Activated CD4-positive, alpha-beta T cell treated with anti-CD3 and anti-CD28 coated beads, Interleukin-2, amount 10 ng/mL, durations not matched to agents 24 days and 14 days (primary cell): ENCODE measurements at regions of chr13 and their contacts with region 1.

Region 1: GRCh38 chr13:49792550-49793324 is at the start of gene KPNA3:
- DNase-seq: peak; percentile 98
- H3K4me3 Mint-ChIP-seq: peak within 1 kb of the TSS; percentile 93
- H3K27ac Mint-ChIP-seq: peak within 1 kb of the TSS; percentile 99
- H3K4me1 Mint-ChIP-seq: peaks cover 30% of the 10 kb centered on the region
- H3K27me3 Mint-ChIP-seq: no peaks in the 10 kb centered on the region
- total RNA-seq, gene KPNA3: 56.5 and 58.8 TPM in 2 replicates

Region 2: GRCh38 chr13:48923376-48923775 is 869.4 kb before region 1 on chr13:
- intact Hi-C with region 1: no loop called
- DNase-seq: no peak
- H3K4me3 Mint-ChIP-seq: no peak overlapping the region
- H3K27ac Mint-ChIP-seq: no peak overlapping the region
- H3K4me1 Mint-ChIP-seq: no peaks in the 10 kb centered on the region
- H3K27me3 Mint-ChIP-seq: no peaks in the 10 kb centered on the region

Region 3: DNA sequence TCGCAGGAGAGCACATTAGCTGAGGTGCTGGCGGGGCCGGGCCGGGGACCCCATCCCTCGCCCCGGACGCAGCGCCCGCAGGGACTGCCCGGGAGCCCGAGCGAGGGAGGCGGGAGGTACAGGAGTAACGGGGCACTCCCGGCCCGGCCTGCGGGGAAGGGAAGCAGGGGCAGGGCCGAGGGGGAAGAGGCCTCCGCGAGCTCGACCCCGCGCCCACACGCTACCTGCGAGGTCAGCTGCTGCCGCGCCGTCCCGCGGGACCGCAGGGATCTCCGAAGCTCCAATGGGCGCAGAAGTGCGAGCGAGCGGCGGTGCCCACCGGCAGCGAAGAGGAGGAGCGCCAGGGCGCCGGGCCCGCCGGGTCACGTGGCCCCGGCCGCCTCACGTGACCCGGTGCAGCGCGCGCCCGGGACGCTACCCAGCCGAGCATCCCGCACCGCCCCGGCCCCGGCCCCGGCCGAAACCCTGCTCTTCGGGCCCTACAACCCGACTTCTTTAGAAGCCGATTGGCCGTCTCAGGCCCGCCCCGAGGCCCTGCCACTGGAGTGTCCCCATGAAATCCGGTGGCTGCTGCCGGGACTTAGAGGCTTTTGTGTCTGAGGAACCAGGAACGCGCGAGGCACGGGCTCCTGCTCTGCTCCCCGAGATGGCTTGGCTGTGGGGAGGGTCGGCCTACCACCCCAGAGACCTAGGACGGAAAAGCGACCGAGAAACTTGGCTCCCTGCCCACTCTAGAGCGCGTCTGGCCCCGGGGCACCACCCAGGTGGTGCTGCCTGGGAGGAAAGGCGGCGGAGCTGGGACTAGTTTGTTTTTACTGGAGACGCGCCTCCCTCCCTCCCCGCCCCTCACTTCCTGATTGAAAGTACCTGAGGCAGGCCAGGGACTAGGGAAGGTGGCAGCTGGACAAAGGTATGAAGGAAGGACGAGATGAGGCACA is 207.2 kb before region 1 on chr13 and contains the start of gene RCBTB1:
- intact Hi-C with region 1: loop called (anchors 2 kb)
- DNase-seq: peak; percentile 92
- H3K4me3 Mint-ChIP-seq: peak within 1 kb of the TSS; percentile 90
- H3K27ac Mint-ChIP-seq: peak within 1 kb of the TSS; percentile 79
- H3K4me1 Mint-ChIP-seq: peaks cover 29% of the 10 kb centered on the region
- H3K27me3 Mint-ChIP-seq: peaks cover 5% of the 10 kb centered on the region
- total RNA-seq, gene RCBTB1: 14.8 and 16.2 TPM in 2 replicates

Region 4: GRCh38 chr13:49652355-49653305 is 140.1 kb before region 1 on chr13:
- intact Hi-C with region 1: no loop called
- DNase-seq: peak; percentile 70
- H3K4me3 Mint-ChIP-seq: no peak overlapping the region
- H3K27ac Mint-ChIP-seq: no peak overlapping the region
- H3K4me1 Mint-ChIP-seq: peaks cover 4% of the 10 kb centered on the region
- H3K27me3 Mint-ChIP-seq: no peaks in the 10 kb centered on the region

Region 5: GRCh38 chr13:49681842-49682435 is 110.8 kb before region 1 on chr13:
- intact Hi-C with region 1: loop called (anchors 2 kb)
- DNase-seq: no peak
- H3K4me3 Mint-ChIP-seq: no peak overlapping the region
- H3K27ac Mint-ChIP-seq: no peak overlapping the region
- H3K4me1 Mint-ChIP-seq: peaks cover 16% of the 10 kb centered on the region
- H3K27me3 Mint-ChIP-seq: no peaks in the 10 kb centered on the region

Region 6: GRCh38 chr13:49690992-49691886 is 101.5 kb before region 1 on chr13 and contains the start of gene EBPL:
- intact Hi-C with region 1: loop called (anchors 1 kb)
- DNase-seq: peak; percentile 96
- H3K4me3 Mint-ChIP-seq: peak within 1 kb of the TSS; percentile 93
- H3K27ac Mint-ChIP-seq: peak within 1 kb of the TSS; percentile 81
- H3K4me1 Mint-ChIP-seq: peaks cover 24% of the 10 kb centered on the region
- H3K27me3 Mint-ChIP-seq: no peaks in the 10 kb centered on the region
- total RNA-seq, gene EBPL: 49.0 and 52.3 TPM in 2 replicates

Region 7: DNA sequence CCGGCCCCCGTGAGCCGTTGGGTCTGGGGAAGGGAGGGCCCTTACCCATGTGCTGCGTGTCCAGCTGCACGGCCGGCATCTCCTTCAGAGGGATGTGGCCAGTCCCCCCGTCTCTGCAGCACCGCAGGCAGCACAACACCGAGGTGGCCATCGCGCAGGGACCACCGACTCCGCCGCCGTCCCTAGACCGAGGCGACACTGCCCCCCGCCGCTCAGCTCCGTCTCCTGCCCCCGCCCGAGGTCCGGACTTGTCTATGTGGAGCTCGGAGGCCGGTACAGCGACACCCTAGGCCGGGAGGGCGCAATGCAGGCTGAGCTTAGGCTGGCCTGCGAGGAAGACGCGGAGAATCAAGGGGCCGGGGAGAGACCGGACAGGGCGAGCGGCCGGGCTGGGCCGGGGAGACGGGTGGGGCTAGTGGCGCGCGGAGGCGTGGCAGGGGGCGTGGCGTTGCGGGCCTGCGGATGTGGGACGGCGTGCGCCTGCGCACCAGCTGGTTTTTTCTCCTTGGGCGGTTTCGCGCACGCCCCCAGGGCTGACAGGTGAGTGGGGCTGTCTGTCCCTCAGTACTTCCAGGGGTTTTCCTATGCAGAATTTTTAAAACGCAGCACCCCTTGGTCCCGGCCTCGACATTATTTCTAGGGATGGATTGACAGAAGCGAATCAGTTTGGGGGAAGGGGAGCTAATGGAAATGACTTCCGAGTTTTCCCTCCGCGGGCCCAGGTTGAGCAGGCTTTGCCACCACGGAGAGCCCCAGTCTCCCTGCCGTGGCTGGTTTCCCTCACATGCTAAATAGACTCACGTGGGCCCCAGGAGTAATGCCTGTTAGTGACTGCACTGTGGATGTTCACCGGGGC is 143.6 kb after region 1 on chr13 and contains the start of gene SPRYD7:
- intact Hi-C with region 1: loop called (anchors 2 kb)
- DNase-seq: peak; percentile 99
- H3K4me3 Mint-ChIP-seq: peak within 1 kb of the TSS; percentile 94
- H3K27ac Mint-ChIP-seq: peak within 1 kb of the TSS; percentile 83
- H3K4me1 Mint-ChIP-seq: peaks cover 13% of the 10 kb centered on the region
- H3K27me3 Mint-ChIP-seq: peaks cover 17% of the 10 kb centered on the region
- total RNA-seq, gene SPRYD7: 6.9 and 8.1 TPM in 2 replicates

Region 8: DNA sequence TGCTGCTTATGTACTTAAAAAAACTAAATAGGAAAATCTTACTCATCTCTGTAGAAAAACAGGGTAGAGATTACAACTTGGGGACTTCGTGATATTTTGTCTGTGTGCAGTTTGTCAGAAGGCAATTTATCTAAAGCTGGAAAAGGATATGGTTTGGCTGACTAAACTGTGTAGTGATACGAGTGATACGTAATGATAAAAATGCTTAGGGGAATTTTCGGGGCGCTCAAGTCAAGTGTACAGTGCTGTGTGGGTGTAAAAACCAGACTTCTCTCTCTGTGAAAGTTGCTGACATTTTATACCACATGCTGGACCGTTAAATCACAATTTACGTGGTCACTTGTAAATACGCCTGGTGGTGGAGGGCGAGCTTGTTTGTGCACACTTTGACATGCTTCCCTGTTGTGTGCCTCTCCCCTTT is 444.2 kb after region 1 on chr13:
- intact Hi-C with region 1: no loop called
- DNase-seq: peak; percentile 83
- H3K4me3 Mint-ChIP-seq: peak overlapping the region; percentile 23
- H3K27ac Mint-ChIP-seq: peak overlapping the region; percentile 84
- H3K4me1 Mint-ChIP-seq: peaks cover 34% of the 10 kb centered on the region
- H3K27me3 Mint-ChIP-seq: peaks cover 29% of the 10 kb centered on the region